Activated CD4-positive, alpha-beta memory T cell treated with anti-CD3 and anti-CD28 coated beads for 36 hours (primary cell): ENCODE measurements at regions of chr17 and their contacts with region 1.

Region 1: GRCh38 chr17:63946440-63947367 is 14.6 kb upstream of the CD79B start:
- DNase-seq: peak; percentile 77
- H3K4me3 Mint-ChIP-seq: peak overlapping the region; percentile 53
- H3K27ac Mint-ChIP-seq: peak overlapping the region; percentile 75
- H3K4me1 Mint-ChIP-seq: peaks cover 14% of the 10 kb centered on the region
- H3K27me3 Mint-ChIP-seq: no peaks in the 10 kb centered on the region

Region 2: GRCh38 chr17:63497708-63498483 is 448.8 kb before region 1 on chr17:
- CTCF ChIA-PET with region 1: no interaction called
- POLR2A ChIA-PET with region 1: no interaction called
- intact Hi-C with region 1: no loop called
- DNase-seq: peak; percentile 15
- H3K4me3 Mint-ChIP-seq: no peak overlapping the region
- H3K27ac Mint-ChIP-seq: no peak overlapping the region
- H3K4me1 Mint-ChIP-seq: no peaks in the 10 kb centered on the region
- H3K27me3 Mint-ChIP-seq: no peaks in the 10 kb centered on the region

Region 3: DNA sequence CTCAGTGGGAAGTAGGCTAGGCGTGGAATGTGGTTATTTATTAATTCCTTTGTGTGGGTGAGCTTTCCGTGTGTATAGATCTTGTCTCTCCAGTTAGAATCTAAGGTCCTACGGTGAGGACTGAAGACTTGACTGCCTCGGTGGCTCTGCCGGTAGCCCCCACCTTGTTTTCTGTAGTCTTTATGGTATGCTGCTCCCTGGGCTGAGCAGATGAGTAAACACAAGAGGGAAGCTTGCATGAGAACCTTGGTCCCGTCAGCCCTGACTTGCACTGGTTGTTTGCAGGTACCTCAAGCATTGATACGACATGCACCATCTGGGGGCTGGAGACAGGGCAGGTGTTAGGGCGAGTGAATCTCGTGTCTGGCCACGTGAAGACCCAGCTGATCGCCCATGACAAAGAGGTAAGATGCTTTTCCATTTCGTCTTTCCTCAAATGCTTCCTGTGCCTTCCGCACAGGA is 367.1 kb before region 1 on chr17:
- CTCF ChIA-PET with region 1: no interaction called
- POLR2A ChIA-PET with region 1: no interaction called
- intact Hi-C with region 1: no loop called
- DNase-seq: no peak
- H3K4me3 Mint-ChIP-seq: no peak overlapping the region
- H3K27ac Mint-ChIP-seq: no peak overlapping the region
- H3K4me1 Mint-ChIP-seq: peaks cover 11% of the 10 kb centered on the region
- H3K27me3 Mint-ChIP-seq: no peaks in the 10 kb centered on the region

Region 4: GRCh38 chr17:63798572-63799106 is 148.1 kb before region 1 on chr17:
- CTCF ChIA-PET with region 1: no interaction called
- POLR2A ChIA-PET with region 1: no interaction called
- intact Hi-C with region 1: no loop called
- DNase-seq: no peak
- H3K4me3 Mint-ChIP-seq: no peak overlapping the region
- H3K27ac Mint-ChIP-seq: no peak overlapping the region
- H3K4me1 Mint-ChIP-seq: no peaks in the 10 kb centered on the region
- H3K27me3 Mint-ChIP-seq: no peaks in the 10 kb centered on the region

Region 5: GRCh38 chr17:63904316-63904715 is 42.4 kb before region 1 on chr17:
- CTCF ChIA-PET with region 1: interaction called, 23 read pairs
- POLR2A ChIA-PET with region 1: no interaction called
- intact Hi-C with region 1: no loop called
- DNase-seq: no peak
- H3K4me3 Mint-ChIP-seq: no peak overlapping the region
- H3K27ac Mint-ChIP-seq: no peak overlapping the region
- H3K4me1 Mint-ChIP-seq: peaks cover 11% of the 10 kb centered on the region
- H3K27me3 Mint-ChIP-seq: no peaks in the 10 kb centered on the region

Region 6: GRCh38 chr17:63919311-63919723 is 27.4 kb before region 1 on chr17:
- CTCF ChIA-PET with region 1: interaction called, 92 read pairs
- POLR2A ChIA-PET with region 1: no interaction called
- intact Hi-C with region 1: loop called (anchors 2 kb)
- DNase-seq: peak; percentile 84
- H3K4me3 Mint-ChIP-seq: peak overlapping the region; percentile 27
- H3K27ac Mint-ChIP-seq: peak overlapping the region; percentile 44
- H3K4me1 Mint-ChIP-seq: peaks cover 6% of the 10 kb centered on the region
- H3K27me3 Mint-ChIP-seq: no peaks in the 10 kb centered on the region

Region 7: DNA sequence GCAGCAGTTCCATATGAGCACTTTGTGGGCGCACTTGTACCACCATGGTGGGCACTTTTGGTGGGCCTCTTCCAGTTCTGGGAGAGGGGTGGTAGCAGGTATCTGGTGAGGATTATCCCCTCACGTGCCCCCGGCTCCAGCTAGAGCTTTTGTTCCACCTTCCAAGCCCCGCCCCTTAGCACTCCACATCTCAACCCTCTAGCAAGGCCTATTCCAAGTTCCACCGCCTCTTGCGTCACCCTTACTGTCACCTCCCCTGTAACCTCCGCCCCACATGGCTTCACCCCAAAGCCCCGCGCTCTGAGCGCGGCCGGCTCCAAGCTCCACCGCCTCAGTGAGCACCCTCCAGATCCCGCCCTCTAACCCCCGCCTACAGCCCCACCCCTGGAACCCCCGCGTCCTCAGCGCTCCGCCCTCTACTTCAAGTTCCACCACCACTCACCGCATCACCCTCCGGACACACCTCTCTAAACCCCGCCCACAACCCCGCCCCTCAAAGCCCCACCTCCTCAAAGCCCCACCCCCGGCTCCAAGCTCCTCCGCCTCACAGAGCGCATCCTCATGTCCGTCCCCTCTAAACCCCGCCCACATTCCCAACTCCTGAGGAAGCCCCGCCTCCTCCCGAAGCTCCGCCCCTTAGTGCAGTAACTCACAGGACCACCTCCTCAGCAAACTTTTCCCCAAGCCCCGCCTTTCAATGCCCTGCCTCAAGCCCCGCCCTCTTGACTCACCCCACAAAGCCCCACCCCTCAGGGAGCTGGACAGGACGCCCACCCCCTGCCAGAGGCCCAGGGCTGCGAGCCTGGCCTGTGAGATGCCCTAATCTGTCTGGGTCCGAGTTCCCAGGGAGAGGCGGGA is 14.9 kb after region 1 on chr17:
- CTCF ChIA-PET with region 1: interaction called, 24 read pairs
- POLR2A ChIA-PET with region 1: no interaction called
- intact Hi-C with region 1: loop called (anchors 2 kb)
- DNase-seq: peak; percentile 70
- H3K4me3 Mint-ChIP-seq: peak overlapping the region; percentile 39
- H3K27ac Mint-ChIP-seq: no peak overlapping the region
- H3K4me1 Mint-ChIP-seq: peaks cover 4% of the 10 kb centered on the region
- H3K27me3 Mint-ChIP-seq: no peaks in the 10 kb centered on the region

Region 8: DNA sequence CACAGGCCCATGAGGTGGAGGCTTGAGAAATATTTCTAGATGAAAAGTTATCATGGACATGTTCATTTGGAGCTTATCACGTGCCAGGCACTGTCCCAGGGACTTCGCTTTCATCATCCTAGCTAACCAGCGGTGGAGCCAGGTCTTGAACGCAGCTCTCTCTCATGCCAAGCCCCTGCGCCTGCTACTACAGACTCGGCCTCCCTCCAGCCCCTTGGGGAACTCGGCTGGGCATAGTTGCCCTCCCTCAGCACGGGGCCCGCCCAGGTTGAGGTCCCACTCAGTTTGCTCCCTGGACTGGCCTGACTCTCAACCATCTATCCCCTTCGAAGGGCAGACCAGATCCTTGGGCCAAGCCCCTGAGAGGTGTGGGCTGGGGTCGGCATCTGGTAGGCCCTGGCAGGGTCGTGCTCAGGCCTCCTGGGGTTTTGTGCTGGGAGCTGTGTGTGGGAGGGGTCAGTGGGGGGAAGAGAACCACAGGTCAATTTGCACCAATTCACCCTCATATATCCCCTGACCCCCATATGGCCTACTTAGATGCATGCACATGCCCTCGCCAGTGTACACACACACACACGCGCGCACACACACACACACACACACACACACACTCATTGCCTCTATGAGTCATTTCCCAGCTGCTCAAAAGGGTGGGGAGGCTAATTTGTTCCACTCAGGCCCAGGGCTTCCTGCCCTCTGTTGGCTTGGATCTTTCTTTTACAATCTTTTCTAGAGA is 38.1 kb after region 1 on chr17:
- CTCF ChIA-PET with region 1: interaction called, 26 read pairs
- POLR2A ChIA-PET with region 1: no interaction called
- intact Hi-C with region 1: loop called (anchors 5 kb)
- DNase-seq: peak; percentile 82
- H3K4me3 Mint-ChIP-seq: peak overlapping the region; percentile 20
- H3K27ac Mint-ChIP-seq: peak overlapping the region; percentile 80
- H3K4me1 Mint-ChIP-seq: peaks cover 18% of the 10 kb centered on the region
- H3K27me3 Mint-ChIP-seq: no peaks in the 10 kb centered on the region

Region 9: DNA sequence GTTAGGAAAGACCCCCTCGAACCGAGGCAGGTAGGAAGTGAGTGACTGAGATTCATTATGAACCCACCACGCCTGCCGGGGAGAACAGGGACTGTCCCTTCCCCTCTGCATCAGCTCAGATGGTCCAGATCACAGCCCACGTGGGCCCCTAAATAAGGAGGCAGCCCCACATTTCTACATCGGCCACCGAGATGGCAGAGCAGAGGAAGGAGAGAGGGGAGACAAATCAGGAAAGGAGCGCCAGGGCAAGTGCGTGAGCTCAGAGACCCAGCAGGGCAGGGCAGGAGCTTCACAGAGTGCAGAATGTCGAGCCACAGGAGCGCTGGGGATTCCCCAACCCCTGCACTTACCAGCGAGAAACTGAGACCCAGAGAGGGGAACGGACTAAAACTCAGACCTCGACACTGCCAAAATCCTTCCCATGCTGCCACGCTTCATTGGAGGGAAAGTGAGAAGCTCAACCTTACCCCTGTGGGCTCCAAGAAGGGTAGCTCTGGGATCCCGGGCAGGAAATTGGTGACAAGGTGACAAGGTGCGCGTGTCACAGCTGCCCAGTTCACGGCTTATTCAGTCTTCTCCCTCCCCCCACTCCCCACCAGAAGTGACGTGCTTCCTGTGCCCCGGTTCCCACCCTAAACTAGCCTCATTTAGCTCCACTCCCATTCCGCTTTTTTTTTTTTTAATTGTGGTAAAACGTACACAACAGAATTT is 73.5 kb after region 1 on chr17 and contains the start of gene ICAM2:
- CTCF ChIA-PET with region 1: interaction called, 47 read pairs
- POLR2A ChIA-PET with region 1: interaction called, 7 read pairs
- intact Hi-C with region 1: no loop called
- DNase-seq: peak; percentile 95
- H3K4me3 Mint-ChIP-seq: peak within 1 kb of the TSS; percentile 93
- H3K27ac Mint-ChIP-seq: peak within 1 kb of the TSS; percentile 98
- H3K4me1 Mint-ChIP-seq: peaks cover 64% of the 10 kb centered on the region
- H3K27me3 Mint-ChIP-seq: no peaks in the 10 kb centered on the region
- total RNA-seq, gene ICAM2: 65.0 to 66.7 TPM